ENCODE measurements at regions of chr14 and their contacts with region 1.

Region 1: GRCh38 chr14:81447021-81447764 is 47.1 kb upstream of the STON2 start:
- DNase-seq: no peak
- ATAC-seq: no peak
- H3K4me3 ChIP-seq: no peak overlapping the region
- H3K27ac ChIP-seq: no peak overlapping the region
- H3K4me1 ChIP-seq: no peaks in the 10 kb centered on the region
- CTCF ChIP-seq: no peak
- EP300 ChIP-seq: no peak
- POLR2A ChIP-seq: no peak
- RAD21 ChIP-seq: no peak

Region 2: GRCh38 chr14:81269100-81269978 is 177.9 kb before region 1 on chr14:
- CTCF ChIA-PET with region 1: interaction called, 180 read pairs
- POLR2A ChIA-PET with region 1: no interaction called
- DNase-seq: peak; percentile 68 to 77
- ATAC-seq: peak; percentile 92 to 93
- H3K4me3 ChIP-seq: no peak overlapping the region
- H3K27ac ChIP-seq: no peak overlapping the region
- H3K4me1 ChIP-seq: no peaks in the 10 kb centered on the region
- CTCF ChIP-seq: peak; percentile 77
- EP300 ChIP-seq: no peak
- POLR2A ChIP-seq: no peak
- RAD21 ChIP-seq: peak; percentile 78

Region 3: DNA sequence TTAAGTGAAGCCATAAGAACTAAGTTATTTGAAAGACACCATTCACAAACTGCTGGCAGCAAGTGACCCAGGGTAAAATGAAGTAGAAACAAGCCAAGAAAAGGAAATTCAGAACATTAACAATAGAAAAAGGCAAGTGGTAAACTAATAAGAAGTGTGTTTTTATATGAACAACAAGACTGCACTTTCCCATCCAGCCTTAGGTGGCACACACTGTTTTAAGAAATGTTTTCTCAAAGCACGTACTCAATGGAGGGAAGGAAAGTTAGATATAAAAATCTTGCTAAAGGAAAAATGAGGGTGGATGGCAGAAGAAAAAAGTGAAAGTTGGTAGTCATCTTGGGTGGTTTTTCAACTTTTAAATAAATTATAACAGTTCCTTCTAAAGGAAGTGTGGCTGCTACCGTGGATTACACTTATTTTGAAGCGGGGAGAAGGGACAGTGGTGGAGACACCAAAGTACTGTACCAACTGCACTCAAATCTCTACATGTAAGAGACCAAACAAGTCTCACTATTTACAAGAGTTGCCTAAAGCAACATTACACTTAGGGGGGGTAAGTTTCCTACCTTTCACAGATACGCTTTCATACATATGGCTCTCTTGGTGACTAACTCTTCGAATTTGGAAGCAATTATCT is 27.6 kb after region 1 on chr14:
- CTCF ChIA-PET with region 1: no interaction called
- POLR2A ChIA-PET with region 1: no interaction called
- DNase-seq: no peak
- ATAC-seq: no peak
- H3K4me3 ChIP-seq: no peak overlapping the region
- H3K27ac ChIP-seq: no peak overlapping the region
- H3K4me1 ChIP-seq: no peaks in the 10 kb centered on the region
- CTCF ChIP-seq: no peak
- EP300 ChIP-seq: no peak
- POLR2A ChIP-seq: no peak
- RAD21 ChIP-seq: no peak